ENCODE measurements at regions of chr15 and their contacts with region 1.

Region 1: GRCh38 chr15:49876401-49877038 is 242.5 kb downstream of the ATP8B4 start:
- DNase-seq: no peak
- H3K4me3 Mint-ChIP-seq: no peak overlapping the region
- H3K27ac Mint-ChIP-seq: peak overlapping the region; percentile 22
- H3K4me1 Mint-ChIP-seq: peaks cover 17% of the 10 kb centered on the region
- H3K27me3 Mint-ChIP-seq: no peaks in the 10 kb centered on the region

Region 2: DNA sequence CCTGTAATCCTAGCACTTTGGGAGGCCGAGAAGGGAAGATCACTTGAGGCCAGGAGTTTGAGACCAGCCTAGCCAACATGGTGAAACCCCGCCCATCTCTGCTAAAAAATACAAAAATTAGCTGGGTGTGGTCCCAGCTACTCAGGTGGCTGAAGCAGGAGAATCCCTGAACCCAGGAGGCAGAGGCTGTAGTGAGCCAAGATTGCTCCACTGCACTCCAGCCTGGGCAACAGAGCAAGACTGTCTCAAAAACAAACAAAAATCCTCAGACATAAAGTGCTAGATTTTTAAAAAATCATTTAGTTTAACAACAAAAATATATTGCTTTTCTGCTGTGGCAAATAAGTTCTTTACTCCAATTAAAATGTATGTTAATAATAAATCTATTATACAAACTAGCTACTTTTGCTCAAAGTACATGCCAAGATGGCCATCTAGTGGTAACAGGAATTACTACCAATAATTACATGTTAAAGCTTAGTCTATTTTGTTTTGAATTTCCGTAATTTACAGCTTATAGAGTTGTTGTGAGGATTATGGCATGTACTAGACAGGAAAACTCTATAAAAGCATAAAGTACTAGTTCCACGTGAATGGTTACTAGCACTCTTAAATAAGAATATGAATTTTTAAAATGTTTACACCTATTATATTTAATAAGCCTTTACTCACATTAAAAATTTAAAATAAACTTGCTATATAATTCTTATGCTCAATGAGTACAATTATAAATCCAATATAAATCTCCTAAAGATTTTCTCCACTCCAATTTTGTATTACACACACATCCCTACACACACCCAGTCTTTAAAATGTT is 439.5 kb after region 1 on chr15:
- intact Hi-C with region 1: loop called (anchors 5 kb)
- DNase-seq: no peak
- H3K4me3 Mint-ChIP-seq: no peak overlapping the region
- H3K27ac Mint-ChIP-seq: no peak overlapping the region
- H3K4me1 Mint-ChIP-seq: peaks cover 44% of the 10 kb centered on the region
- H3K27me3 Mint-ChIP-seq: no peaks in the 10 kb centered on the region